Naive thymus-derived CD4-positive, alpha-beta T cell (primary cell): ENCODE measurements at regions of chr11 and their contacts with region 1.

Region 1: DNA sequence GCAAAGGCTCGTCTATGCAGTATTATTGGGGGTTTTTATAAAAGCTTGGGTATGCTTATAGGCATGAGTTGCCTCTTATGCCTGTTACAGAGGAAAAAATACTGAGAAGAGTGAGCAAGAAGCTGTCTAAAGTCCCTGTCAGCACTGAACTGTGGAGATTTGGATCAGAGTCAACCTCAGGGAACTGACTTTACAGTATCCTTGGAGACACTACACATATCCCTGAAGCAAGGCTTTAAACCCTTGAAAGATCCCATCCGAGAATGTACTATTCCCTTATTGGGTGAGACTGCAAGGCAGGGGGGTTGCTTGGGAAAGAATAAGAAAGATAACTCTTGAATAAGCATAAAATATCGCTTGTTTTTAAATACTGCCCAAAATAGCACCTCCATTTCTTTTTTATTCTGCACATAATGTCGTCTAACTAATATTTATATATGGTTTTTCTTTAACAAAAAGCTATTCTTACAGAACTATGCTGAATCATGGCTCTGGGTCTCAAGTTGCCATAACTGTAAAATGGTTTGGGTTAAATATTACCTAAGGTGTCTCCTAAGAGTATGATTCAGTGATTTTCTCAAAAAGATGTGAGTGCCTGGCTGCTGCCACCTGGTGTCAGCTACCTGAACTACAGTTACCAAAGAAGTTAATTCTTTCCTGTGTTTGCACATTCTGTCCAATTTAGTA is 1062.8 kb downstream of the DLG2 start:
- DNase-seq: peak in 1 of 9 donors; percentile 4
- ATAC-seq: no peak
- H3K4me3 ChIP-seq: no peak overlapping the region
- H3K4me3 Mint-ChIP-seq: no peak overlapping the region
- H3K27ac ChIP-seq: no peak overlapping the region
- H3K27ac Mint-ChIP-seq: no peak overlapping the region
- H3K4me1 ChIP-seq: no peaks in the 10 kb centered on the region
- H3K4me1 Mint-ChIP-seq: no peaks in the 10 kb centered on the region
- H3K27me3 ChIP-seq: no peaks in the 10 kb centered on the region
- H3K27me3 Mint-ChIP-seq: no peaks in the 10 kb centered on the region

Region 2: GRCh38 chr11:82682003-82682751 is 1882.1 kb before region 1 on chr11:
- CTCF ChIA-PET with region 1: interaction called, 3 read pairs
- POLR2A ChIA-PET with region 1: no interaction called
- intact Hi-C with region 1: loop called in 1 of 2 experiments (anchors 10 kb)
- DNase-seq: peak in 7 of 9 donors; percentile 24 to 55 (median 38)
- ATAC-seq: peak; percentile 72
- H3K4me3 ChIP-seq: no peak overlapping the region
- H3K4me3 Mint-ChIP-seq: peak overlapping the region in 1 of 10 donors; percentile 5
- H3K27ac ChIP-seq: no peak overlapping the region
- H3K27ac Mint-ChIP-seq: peak overlapping the region in 2 of 9 donors; percentile 2 to 19
- H3K4me1 ChIP-seq: no peaks in the 10 kb centered on the region
- H3K4me1 Mint-ChIP-seq: peaks cover 0 to 5% (median 0%) of the 10 kb centered on the region in 7 donors
- H3K27me3 ChIP-seq: no peaks in the 10 kb centered on the region
- H3K27me3 Mint-ChIP-seq: peaks cover 8 to 20% (median 17%) of the 10 kb centered on the region in 5 donors

Region 3: DNA sequence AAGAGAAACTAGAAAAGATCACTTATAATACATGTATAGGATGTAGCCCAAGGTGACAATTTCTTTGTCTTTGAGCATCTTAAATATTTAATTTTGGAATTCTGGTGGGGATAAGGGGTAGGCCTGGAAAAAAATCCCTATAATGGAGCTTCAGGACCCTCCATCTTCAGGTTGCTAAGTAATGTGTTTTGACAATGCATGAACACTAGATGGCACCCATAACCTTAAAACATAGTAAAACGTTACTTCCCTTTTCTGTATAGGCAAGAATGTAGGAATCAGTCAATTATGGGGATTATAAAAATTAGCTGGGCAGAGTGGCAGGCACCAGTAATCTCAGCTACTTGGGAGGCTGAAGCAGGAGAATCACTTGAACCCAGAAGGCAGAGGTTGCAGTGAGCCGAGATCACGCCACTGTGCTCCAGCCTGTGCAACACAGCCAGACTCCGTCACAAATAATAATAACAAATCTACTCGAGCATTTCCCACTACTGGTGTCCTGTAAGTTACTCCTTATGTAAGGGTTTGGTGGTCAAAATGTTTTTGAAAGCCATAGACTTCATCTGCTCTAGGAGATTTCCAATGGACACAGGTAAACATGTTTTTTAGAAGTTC is 736.3 kb before region 1 on chr11:
- CTCF ChIA-PET with region 1: no interaction called
- POLR2A ChIA-PET with region 1: no interaction called
- intact Hi-C with region 1: loop called in 1 of 2 experiments (anchors 2 kb)
- DNase-seq: no peak
- ATAC-seq: peak; percentile 27
- H3K4me3 ChIP-seq: no peak overlapping the region
- H3K4me3 Mint-ChIP-seq: no peak overlapping the region
- H3K27ac ChIP-seq: no peak overlapping the region
- H3K27ac Mint-ChIP-seq: no peak overlapping the region
- H3K4me1 ChIP-seq: no peaks in the 10 kb centered on the region
- H3K4me1 Mint-ChIP-seq: no peaks in the 10 kb centered on the region
- H3K27me3 ChIP-seq: no peaks in the 10 kb centered on the region
- H3K27me3 Mint-ChIP-seq: peaks cover 2 to 8% (median 5%) of the 10 kb centered on the region in 5 donors

Region 4: DNA sequence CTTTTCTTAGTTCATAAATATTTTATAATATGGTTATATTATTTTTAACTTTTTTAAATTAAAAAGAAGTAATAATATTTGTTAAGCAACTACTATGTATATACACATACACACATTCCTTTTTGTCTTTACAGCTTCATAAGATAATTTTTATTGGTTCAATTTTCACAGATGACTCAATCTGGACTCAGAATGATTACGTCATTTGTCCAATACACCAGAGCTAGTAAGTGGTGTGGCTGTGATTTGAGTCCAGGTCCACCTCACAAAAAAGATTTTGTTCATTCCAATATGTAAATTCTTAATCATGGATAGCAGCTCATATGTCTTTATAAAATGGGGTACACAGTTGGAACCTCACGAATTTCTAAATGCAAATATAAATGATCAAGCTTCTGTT is 48.3 kb after region 1 on chr11:
- CTCF ChIA-PET with region 1: no interaction called
- POLR2A ChIA-PET with region 1: no interaction called
- intact Hi-C with region 1: no loop called
- DNase-seq: no peak
- ATAC-seq: no peak
- H3K4me3 ChIP-seq: no peak overlapping the region
- H3K4me3 Mint-ChIP-seq: no peak overlapping the region
- H3K27ac ChIP-seq: no peak overlapping the region
- H3K27ac Mint-ChIP-seq: no peak overlapping the region
- H3K4me1 ChIP-seq: no peaks in the 10 kb centered on the region
- H3K4me1 Mint-ChIP-seq: peaks cover 0 to 2% (median 0%) of the 10 kb centered on the region in 7 donors
- H3K27me3 ChIP-seq: no peaks in the 10 kb centered on the region
- H3K27me3 Mint-ChIP-seq: no peaks in the 10 kb centered on the region

Region 5: GRCh38 chr11:84720706-84721402 is 156.5 kb after region 1 on chr11:
- CTCF ChIA-PET with region 1: no interaction called
- POLR2A ChIA-PET with region 1: no interaction called
- intact Hi-C with region 1: loop called in 1 of 2 experiments (anchors 10 kb)
- DNase-seq: peak in 8 of 9 donors; percentile 1 to 23 (median 14)
- ATAC-seq: peak; percentile 40
- H3K4me3 ChIP-seq: no peak overlapping the region
- H3K4me3 Mint-ChIP-seq: peak overlapping the region; percentile 63 to 89 (median 80)
- H3K27ac ChIP-seq: no peak overlapping the region
- H3K27ac Mint-ChIP-seq: peak overlapping the region in 8 of 9 donors; percentile 52 to 92 (median 75)
- H3K4me1 ChIP-seq: no peaks in the 10 kb centered on the region
- H3K4me1 Mint-ChIP-seq: peaks cover 0 to 21% (median 13%) of the 10 kb centered on the region in 7 donors
- H3K27me3 ChIP-seq: no peaks in the 10 kb centered on the region
- H3K27me3 Mint-ChIP-seq: peaks cover 4 to 24% (median 11%) of the 10 kb centered on the region in 5 donors

Region 6: GRCh38 chr11:84800755-84801346 is 236.5 kb after region 1 on chr11:
- CTCF ChIA-PET with region 1: no interaction called
- POLR2A ChIA-PET with region 1: no interaction called
- intact Hi-C with region 1: no loop called
- DNase-seq: no peak
- ATAC-seq: no peak
- H3K4me3 ChIP-seq: no peak overlapping the region
- H3K4me3 Mint-ChIP-seq: no peak overlapping the region
- H3K27ac ChIP-seq: no peak overlapping the region
- H3K27ac Mint-ChIP-seq: no peak overlapping the region
- H3K4me1 ChIP-seq: no peaks in the 10 kb centered on the region
- H3K4me1 Mint-ChIP-seq: no peaks in the 10 kb centered on the region
- H3K27me3 ChIP-seq: no peaks in the 10 kb centered on the region
- H3K27me3 Mint-ChIP-seq: no peaks in the 10 kb centered on the region